Naive thymus-derived CD4-positive, alpha-beta T cell (primary cell): ENCODE measurements at regions of chr9 and their contacts with region 1.

Region 1: DNA sequence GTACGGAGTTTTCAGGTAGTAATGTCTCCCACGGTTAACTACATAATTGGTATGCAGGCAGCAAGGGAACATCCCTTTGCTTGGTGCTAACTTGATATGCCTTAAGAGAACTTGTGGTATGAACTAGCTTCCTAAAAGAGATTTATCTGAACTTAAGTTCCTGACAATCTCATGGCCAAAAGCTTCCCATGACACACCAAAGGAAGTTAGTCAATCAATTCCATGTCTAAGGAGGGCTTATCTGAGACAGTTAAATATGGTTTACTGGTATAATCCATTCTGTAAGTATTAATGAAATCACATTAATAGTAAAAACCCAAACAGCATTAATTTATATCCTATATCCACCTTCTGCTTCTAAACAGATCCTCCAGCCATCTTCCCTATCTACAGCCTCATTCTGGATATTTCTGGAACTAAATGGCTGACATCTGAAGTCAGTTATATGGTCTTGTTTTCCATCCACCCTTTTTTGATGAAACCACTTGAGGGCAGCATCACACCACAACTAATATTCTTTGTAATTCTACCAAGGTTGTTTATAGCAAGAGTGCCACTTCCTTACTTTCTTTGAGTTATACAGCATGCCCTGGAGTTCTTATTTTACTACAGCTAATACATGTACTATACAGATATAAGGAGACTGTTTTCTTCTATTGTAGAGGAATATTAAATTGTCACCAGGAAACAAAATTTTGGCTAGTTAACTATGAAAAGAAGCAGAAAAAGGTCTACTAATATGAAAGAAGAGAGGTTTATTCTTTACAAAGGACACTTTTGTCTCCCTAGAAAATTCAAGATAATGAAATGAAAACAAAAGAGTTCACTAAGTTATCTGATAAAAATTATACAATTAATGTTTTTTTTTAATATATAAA is 34.7 kb downstream of the SHOC1 start:
- DNase-seq: peak in 8 of 9 donors; percentile 25 to 77 (median 68)
- ATAC-seq: peak; percentile 82
- H3K4me3 ChIP-seq: no peak overlapping the region
- H3K4me3 Mint-ChIP-seq: no peak overlapping the region
- H3K27ac ChIP-seq: no peak overlapping the region
- H3K27ac Mint-ChIP-seq: no peak overlapping the region
- H3K4me1 ChIP-seq: no peaks in the 10 kb centered on the region
- H3K4me1 Mint-ChIP-seq: peaks cover 3 to 8% (median 5%) of the 10 kb centered on the region in 7 donors
- H3K27me3 ChIP-seq: no peaks in the 10 kb centered on the region
- H3K27me3 Mint-ChIP-seq: no peaks in the 10 kb centered on the region

Region 2: GRCh38 chr9:111605041-111605559 is 154.9 kb before region 1 on chr9:
- CTCF ChIA-PET with region 1: no interaction called
- POLR2A ChIA-PET with region 1: no interaction called
- intact Hi-C with region 1: no loop called
- DNase-seq: no peak
- ATAC-seq: no peak
- H3K4me3 ChIP-seq: no peak overlapping the region
- H3K4me3 Mint-ChIP-seq: no peak overlapping the region
- H3K27ac ChIP-seq: no peak overlapping the region
- H3K27ac Mint-ChIP-seq: no peak overlapping the region
- H3K4me1 ChIP-seq: no peaks in the 10 kb centered on the region
- H3K4me1 Mint-ChIP-seq: peaks cover 0 to 9% (median 0%) of the 10 kb centered on the region in 7 donors
- H3K27me3 ChIP-seq: peaks cover 0 to 3% of the 10 kb centered on the region in 2 donors
- H3K27me3 Mint-ChIP-seq: peaks cover 6 to 25% (median 20%) of the 10 kb centered on the region in 5 donors

Region 3: GRCh38 chr9:111828193-111828592 is 68.2 kb after region 1 on chr9:
- CTCF ChIA-PET with region 1: interaction called, 5 read pairs
- POLR2A ChIA-PET with region 1: no interaction called
- intact Hi-C with region 1: loop called in 1 of 2 experiments (anchors 1 kb)
- DNase-seq: peak in 2 of 9 donors; percentile 3 to 6
- ATAC-seq: no peak
- H3K4me3 ChIP-seq: no peak overlapping the region
- H3K4me3 Mint-ChIP-seq: no peak overlapping the region
- H3K27ac ChIP-seq: no peak overlapping the region
- H3K27ac Mint-ChIP-seq: no peak overlapping the region
- H3K4me1 ChIP-seq: no peaks in the 10 kb centered on the region
- H3K4me1 Mint-ChIP-seq: peaks cover 0 to 2% (median 0%) of the 10 kb centered on the region in 7 donors
- H3K27me3 ChIP-seq: no peaks in the 10 kb centered on the region
- H3K27me3 Mint-ChIP-seq: peaks cover 0 to 8% (median 0%) of the 10 kb centered on the region in 5 donors

Region 4: DNA sequence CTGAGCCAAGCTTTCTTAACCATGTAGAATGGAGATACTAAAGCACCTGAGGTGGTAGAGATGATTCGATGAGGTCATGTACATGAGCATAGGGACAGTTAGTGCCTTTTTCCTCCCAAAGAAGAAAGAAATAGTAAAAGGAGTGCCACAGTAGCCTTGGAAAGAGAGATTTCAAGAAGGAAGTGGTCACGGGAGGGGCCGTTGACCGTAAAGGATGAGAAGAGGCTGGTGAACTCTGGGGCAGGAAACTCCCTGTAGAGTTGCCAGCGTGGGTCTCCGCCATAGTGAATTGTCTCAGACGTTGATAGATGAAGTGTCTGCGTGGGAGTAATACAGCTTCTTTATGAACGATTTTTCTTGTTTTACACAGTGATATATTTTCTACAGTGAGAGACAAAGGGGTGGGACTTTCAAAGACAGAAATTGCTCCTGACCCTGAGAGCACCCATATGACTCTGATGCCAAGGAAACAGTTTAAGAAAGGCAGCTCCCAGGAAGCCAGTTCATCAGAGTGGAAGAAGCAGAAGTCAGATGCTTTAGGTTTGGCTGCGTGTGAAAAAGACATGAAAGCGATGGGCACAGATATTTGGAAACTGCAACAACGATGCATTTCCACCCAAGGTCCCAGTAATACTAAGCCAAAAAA is 177.9 kb after region 1 on chr9:
- CTCF ChIA-PET with region 1: no interaction called
- POLR2A ChIA-PET with region 1: interaction called, 3 read pairs
- intact Hi-C with region 1: loop called in 1 of 2 experiments (anchors 10 kb)
- DNase-seq: peak; percentile 12 to 71 (median 53)
- ATAC-seq: peak; percentile 96
- H3K4me3 ChIP-seq: peak overlapping the region; percentile 29
- H3K4me3 Mint-ChIP-seq: peak overlapping the region; percentile 52 to 82 (median 76)
- H3K27ac ChIP-seq: peak overlapping the region; percentile 19
- H3K27ac Mint-ChIP-seq: peak overlapping the region; percentile 83 to 93 (median 90)
- H3K4me1 ChIP-seq: peaks cover 15 to 19% of the 10 kb centered on the region in 2 donors
- H3K4me1 Mint-ChIP-seq: peaks cover 20 to 43% (median 33%) of the 10 kb centered on the region in 7 donors
- H3K27me3 ChIP-seq: no peaks in the 10 kb centered on the region
- H3K27me3 Mint-ChIP-seq: no peaks in the 10 kb centered on the region

Region 5: GRCh38 chr9:111985315-111985714 is 225.3 kb after region 1 on chr9:
- CTCF ChIA-PET with region 1: no interaction called
- POLR2A ChIA-PET with region 1: no interaction called
- intact Hi-C with region 1: loop called in 1 of 2 experiments (anchors 2 kb)
- DNase-seq: no peak
- ATAC-seq: no peak
- H3K4me3 ChIP-seq: no peak overlapping the region
- H3K4me3 Mint-ChIP-seq: peak overlapping the region in 6 of 10 donors; percentile 28 to 59 (median 53)
- H3K27ac ChIP-seq: no peak overlapping the region
- H3K27ac Mint-ChIP-seq: peak overlapping the region in 1 of 9 donors; percentile 83
- H3K4me1 ChIP-seq: peaks cover 6 to 15% of the 10 kb centered on the region in 2 donors
- H3K4me1 Mint-ChIP-seq: peaks cover 18 to 37% (median 30%) of the 10 kb centered on the region in 7 donors
- H3K27me3 ChIP-seq: no peaks in the 10 kb centered on the region
- H3K27me3 Mint-ChIP-seq: peaks cover 0 to 13% (median 0%) of the 10 kb centered on the region in 5 donors

Region 6: DNA sequence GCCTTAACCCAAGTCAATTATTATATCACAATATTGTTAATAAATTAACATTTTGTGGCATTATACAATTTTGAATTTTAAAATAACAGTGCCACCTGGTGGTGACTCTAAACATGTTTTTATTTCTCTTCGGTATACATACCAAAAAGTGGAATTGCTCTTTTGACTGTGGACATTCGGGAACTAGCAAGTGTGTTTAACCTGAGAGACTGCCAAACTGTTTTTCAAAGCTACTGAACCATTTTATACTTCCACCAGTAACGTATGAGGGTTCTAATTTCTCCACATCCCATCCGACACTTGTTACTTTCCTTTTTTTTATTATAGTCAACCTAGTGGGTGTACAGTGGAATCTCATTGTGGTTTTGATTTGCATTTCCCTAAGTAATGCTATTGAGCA is 601.6 kb after region 1 on chr9:
- CTCF ChIA-PET with region 1: interaction called, 5 read pairs
- POLR2A ChIA-PET with region 1: no interaction called
- intact Hi-C with region 1: loop called (anchors 1 kb)
- DNase-seq: peak in 7 of 9 donors; percentile 16 to 51 (median 40)
- ATAC-seq: peak; percentile 60
- H3K4me3 ChIP-seq: no peak overlapping the region
- H3K4me3 Mint-ChIP-seq: no peak overlapping the region
- H3K27ac ChIP-seq: no peak overlapping the region
- H3K27ac Mint-ChIP-seq: no peak overlapping the region
- H3K4me1 ChIP-seq: peaks cover 0 to 4% of the 10 kb centered on the region in 2 donors
- H3K4me1 Mint-ChIP-seq: peaks cover 0 to 4% (median 0%) of the 10 kb centered on the region in 7 donors
- H3K27me3 ChIP-seq: no peaks in the 10 kb centered on the region
- H3K27me3 Mint-ChIP-seq: peaks cover 0 to 22% (median 9%) of the 10 kb centered on the region in 5 donors